Activated B cell treated with CpG ODN at 0.5 μM for 24 hours (primary cell): ENCODE measurements at regions of chr19 and their contacts with region 1.

Region 1: GRCh38 chr19:7478173-7478842 is 10.5 kb downstream of the PEX11G start:
- DNase-seq: no peak
- ATAC-seq: no peak
- H3K4me3 Mint-ChIP-seq: no peak overlapping the region
- H3K27ac Mint-ChIP-seq: peak overlapping the region; percentile 50
- H3K4me1 Mint-ChIP-seq: peaks cover 11% of the 10 kb centered on the region
- H3K27me3 Mint-ChIP-seq: no peaks in the 10 kb centered on the region
- CTCF ChIP-seq: no peak

Region 2: GRCh38 chr19:7925171-7925851 is 447.0 kb after region 1 on chr19:
- CTCF ChIA-PET with region 1: no interaction called
- POLR2A ChIA-PET with region 1: interaction called, 14 read pairs
- intact Hi-C with region 1: no loop called
- DNase-seq: peak; percentile 75
- ATAC-seq: peak; percentile 8
- H3K4me3 Mint-ChIP-seq: peak overlapping the region; percentile 84
- H3K27ac Mint-ChIP-seq: no peak overlapping the region
- H3K4me1 Mint-ChIP-seq: peaks cover 30% of the 10 kb centered on the region
- H3K27me3 Mint-ChIP-seq: peaks cover 1% of the 10 kb centered on the region
- CTCF ChIP-seq: peak; percentile 29